A673 (cell line): ENCODE measurements at regions of chr17 and their contacts with region 1.

Region 1: DNA sequence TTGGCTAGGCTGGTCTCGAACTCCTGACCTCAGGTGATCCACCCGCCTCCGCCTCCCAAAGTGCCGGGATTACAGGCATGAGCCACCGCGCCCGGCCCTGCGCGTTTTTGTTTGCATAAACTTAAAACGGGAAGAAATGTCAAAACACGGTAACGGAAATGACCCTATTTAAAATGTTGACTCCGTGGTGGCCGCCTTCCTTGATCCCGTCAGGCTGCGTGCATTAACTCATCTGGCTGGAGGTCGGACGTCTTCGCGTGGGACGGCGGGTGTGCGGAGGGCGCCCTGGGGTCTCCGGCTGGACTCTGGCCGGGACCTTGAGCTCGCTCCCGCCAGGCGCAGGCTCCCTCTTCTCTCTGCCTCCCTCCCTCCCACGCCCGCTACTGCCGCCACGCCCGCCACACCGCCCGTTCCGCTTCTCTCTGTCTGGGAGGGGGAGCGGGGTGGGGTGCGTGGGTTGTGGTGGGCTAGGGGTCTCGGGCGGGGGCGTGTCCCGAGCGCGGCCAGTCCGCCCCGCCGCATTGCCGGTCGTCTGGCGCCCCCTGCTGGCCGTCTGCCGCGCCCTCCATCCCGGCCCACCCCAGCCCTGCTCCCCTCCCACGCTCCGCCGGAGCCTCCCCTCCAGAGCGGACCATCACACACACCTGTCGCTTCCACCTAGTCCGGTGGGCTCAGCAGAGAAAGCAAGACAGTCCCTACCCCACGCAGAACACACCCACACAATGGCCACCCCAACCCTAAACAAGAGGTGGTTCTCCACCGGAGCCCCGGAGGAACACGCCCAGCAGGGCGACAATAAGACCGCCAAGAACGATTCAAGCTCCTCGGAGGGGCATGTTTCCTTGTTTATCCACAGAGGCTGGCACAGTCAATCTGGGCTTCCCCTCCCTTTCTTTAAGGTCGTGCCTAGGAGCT is 1.2 kb upstream of the CCDC42 start:
- DNase-seq: peak; percentile 67
- H3K4me3 ChIP-seq: peak overlapping the region; percentile 60
- H3K27ac ChIP-seq: no peak overlapping the region
- H3K4me1 ChIP-seq: no peaks in the 10 kb centered on the region
- H3K27me3 ChIP-seq: no peaks in the 10 kb centered on the region
- CTCF ChIP-seq: peak; percentile 81

Region 2: GRCh38 chr17:8383143-8383822 is 362.6 kb before region 1 on chr17 and contains the start of gene RPL26:
- CTCF ChIA-PET with region 1: interaction called, 6 read pairs
- POLR2A ChIA-PET with region 1: no interaction called
- intact Hi-C with region 1: loop called (anchors 1 kb)
- DNase-seq: peak; percentile 100
- H3K4me3 ChIP-seq: peak within 1 kb of the TSS; percentile 79
- H3K27ac ChIP-seq: peak within 1 kb of the TSS; percentile 91
- H3K4me1 ChIP-seq: peaks cover 33% of the 10 kb centered on the region
- H3K27me3 ChIP-seq: no peaks in the 10 kb centered on the region
- CTCF ChIP-seq: peak; percentile 97
- total RNA-seq, gene RPL26: 1,604 and 1,668 TPM in 2 replicates

Region 3: DNA sequence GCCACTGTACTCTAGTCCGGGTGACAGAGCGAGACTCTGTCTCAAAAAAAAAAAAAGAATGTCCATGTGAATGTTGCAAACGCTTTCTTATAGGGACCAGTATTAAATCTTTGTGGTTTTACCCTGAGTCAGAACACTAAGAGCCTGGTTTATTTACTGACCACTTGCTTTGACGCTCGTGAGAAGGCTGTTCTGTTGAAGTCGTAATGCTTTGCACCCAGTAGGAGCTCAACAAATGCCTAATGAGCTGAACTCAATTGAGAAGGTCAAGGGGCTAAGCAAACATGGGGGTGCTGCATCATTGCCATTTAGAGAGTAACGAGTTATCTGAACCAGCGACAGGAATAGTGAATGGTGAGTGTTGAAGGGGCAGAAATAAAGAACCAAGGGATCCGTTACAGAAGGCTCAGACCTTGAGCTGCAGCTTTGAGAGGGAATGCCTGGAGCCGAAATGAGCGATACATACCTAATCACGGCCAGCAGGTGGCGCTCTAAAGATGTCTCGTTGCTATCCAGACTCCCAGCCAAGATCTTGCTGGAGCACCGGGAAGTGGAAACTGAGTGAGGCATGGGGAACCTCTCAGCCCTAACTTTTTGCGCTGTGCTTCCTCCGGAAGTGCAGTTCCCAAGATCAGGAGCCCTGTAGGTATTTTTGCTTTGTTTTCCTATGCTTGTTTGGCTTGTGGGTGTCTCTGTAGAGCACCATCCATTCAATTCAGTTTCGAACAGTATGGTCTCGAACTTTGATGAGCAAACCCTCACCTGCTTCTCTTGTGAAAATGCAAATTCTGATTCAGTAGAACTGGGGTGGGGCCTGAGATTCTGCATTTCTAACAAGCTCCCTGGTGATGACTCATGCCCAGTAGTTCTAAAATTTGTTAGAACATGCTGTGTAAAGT is 335.6 kb before region 1 on chr17:
- CTCF ChIA-PET with region 1: interaction called, 14 read pairs
- POLR2A ChIA-PET with region 1: no interaction called
- intact Hi-C with region 1: loop called (anchors 1 kb)
- DNase-seq: peak; percentile 93
- H3K4me3 ChIP-seq: no peak overlapping the region
- H3K27ac ChIP-seq: no peak overlapping the region
- H3K4me1 ChIP-seq: no peaks in the 10 kb centered on the region
- H3K27me3 ChIP-seq: no peaks in the 10 kb centered on the region
- CTCF ChIP-seq: peak; percentile 94

Region 4: DNA sequence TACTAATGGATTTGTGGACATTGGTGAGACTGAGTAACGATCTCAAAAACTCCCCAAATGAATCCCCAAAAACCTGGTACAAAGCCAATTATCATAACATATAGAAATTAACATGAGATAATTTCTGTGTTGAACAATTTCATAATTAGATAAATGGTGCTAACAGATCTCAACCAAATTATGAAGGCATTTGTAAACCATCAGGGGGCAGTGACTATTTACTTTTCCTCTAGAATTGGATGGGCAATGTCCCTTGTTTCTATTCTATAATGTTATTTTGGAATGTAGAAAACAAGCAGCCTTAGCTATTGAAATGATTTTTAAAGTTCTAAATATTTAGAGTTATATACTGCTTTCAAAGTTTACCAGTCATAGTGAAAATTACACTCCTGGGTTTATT is 173.1 kb before region 1 on chr17:
- CTCF ChIA-PET with region 1: no interaction called
- POLR2A ChIA-PET with region 1: no interaction called
- intact Hi-C with region 1: loop called (anchors 5 kb)
- DNase-seq: no peak
- H3K4me3 ChIP-seq: no peak overlapping the region
- H3K27ac ChIP-seq: no peak overlapping the region
- H3K4me1 ChIP-seq: no peaks in the 10 kb centered on the region
- H3K27me3 ChIP-seq: no peaks in the 10 kb centered on the region
- CTCF ChIP-seq: peak; percentile 47

Region 5: GRCh38 chr17:8832711-8833352 is 87.0 kb after region 1 on chr17:
- CTCF ChIA-PET with region 1: no interaction called
- POLR2A ChIA-PET with region 1: no interaction called
- intact Hi-C with region 1: no loop called
- DNase-seq: peak; percentile 67
- H3K4me3 ChIP-seq: no peak overlapping the region
- H3K27ac ChIP-seq: no peak overlapping the region
- H3K4me1 ChIP-seq: peaks cover under 1% of the 10 kb centered on the region
- H3K27me3 ChIP-seq: no peaks in the 10 kb centered on the region
- CTCF ChIP-seq: peak; percentile 85

Region 6: DNA sequence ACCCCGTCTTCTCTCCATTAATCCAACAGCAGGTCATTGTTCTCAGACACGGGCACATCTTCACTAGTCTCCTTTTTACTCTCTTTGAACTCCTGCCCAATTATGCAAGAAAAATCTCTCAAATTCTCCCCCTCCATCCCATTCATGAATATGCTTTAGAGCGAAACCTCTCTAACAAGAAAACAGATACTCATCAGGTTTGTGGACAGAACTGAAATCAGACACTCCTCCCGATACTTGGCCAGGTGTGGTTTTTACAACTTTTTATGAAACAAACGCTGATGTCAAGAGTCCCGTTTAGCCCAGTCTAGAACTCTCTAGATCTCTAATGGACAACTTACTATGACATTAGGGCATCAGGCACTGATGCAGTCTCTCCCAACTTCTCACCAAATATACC is 178.8 kb after region 1 on chr17:
- CTCF ChIA-PET with region 1: no interaction called
- POLR2A ChIA-PET with region 1: no interaction called
- intact Hi-C with region 1: no loop called
- DNase-seq: no peak
- H3K4me3 ChIP-seq: no peak overlapping the region
- H3K27ac ChIP-seq: no peak overlapping the region
- H3K4me1 ChIP-seq: no peaks in the 10 kb centered on the region
- H3K27me3 ChIP-seq: peaks cover 7% of the 10 kb centered on the region
- CTCF ChIP-seq: no peak